Dendritic cell treated with granulocyte-macrophage colony-stimulating factor and Interleukin-4, amounts not matched to agents 40 ng/mL and 50 ng/mL, for 4 days (primary cell): ENCODE measurements at regions of chr4 and their contacts with region 1.

Region 1: DNA sequence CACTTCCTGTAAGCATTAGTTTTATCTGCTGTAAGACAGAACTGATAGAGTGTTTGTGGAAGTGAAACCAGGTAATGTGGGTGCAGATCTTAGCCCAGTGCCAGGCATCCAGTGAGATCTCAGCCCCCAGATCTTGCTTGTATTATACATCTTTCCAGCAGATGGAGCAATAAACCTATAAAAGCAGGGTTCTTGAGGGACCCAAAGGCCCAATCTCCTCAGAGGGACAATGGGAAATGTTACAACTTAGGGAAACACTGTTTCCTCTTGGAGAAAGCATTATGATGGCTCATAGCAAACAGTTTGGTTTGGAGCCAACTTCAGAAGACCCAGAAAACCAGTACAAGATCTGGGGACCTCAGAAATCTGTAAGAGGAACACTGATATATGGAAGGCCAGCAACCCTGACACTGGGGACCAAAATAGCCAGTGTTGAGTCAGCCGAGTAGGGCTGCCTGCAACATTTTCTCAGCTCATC is 206.3 kb downstream of the SLC7A11 start:
- H3K4me3 Mint-ChIP-seq: no peak overlapping the region
- H3K27ac Mint-ChIP-seq: no peak overlapping the region
- H3K4me1 Mint-ChIP-seq: peaks cover 5% of the 10 kb centered on the region
- H3K27me3 Mint-ChIP-seq: no peaks in the 10 kb centered on the region

Region 2: DNA sequence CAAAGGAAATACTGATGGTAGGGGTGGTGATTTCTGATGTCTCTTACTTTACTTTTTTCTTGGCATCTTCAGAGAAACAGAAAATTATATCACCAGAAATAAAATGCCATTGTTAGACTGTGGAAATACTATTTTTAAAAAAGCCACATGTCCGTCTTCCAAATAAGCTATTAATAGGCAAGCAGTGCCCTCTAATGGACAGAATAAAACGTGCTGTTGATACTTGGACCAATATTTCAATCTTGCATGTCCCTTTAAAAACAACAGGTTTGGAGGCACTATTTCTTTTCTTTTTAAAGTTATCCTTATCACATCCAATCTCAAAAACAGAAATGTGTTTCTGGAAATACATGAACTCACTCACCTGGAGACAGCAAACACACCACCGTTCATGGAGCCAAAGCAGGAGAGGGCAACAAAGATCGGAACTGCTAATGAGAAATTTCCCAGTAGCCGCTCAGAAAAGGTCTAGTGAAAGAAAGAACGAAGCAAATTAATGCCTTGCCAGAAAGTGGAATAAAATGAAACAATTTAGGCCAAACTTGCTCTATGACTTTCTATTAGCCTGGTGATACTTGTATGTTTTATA is 147.1 kb after region 1 on chr4:
- intact Hi-C with region 1: loop called (anchors 5 kb)
- H3K4me3 Mint-ChIP-seq: no peak overlapping the region
- H3K27ac Mint-ChIP-seq: peak overlapping the region; percentile 33
- H3K4me1 Mint-ChIP-seq: peaks cover 26% of the 10 kb centered on the region
- H3K27me3 Mint-ChIP-seq: no peaks in the 10 kb centered on the region

Region 3: GRCh38 chr4:138522366-138522765 is 486.5 kb after region 1 on chr4:
- intact Hi-C with region 1: loop called (anchors 2 kb)
- H3K4me3 Mint-ChIP-seq: no peak overlapping the region
- H3K27ac Mint-ChIP-seq: peak overlapping the region; percentile 15
- H3K4me1 Mint-ChIP-seq: peaks cover 13% of the 10 kb centered on the region
- H3K27me3 Mint-ChIP-seq: peaks cover 15% of the 10 kb centered on the region

Region 4: GRCh38 chr4:138870737-138871554 is 835.1 kb after region 1 on chr4:
- intact Hi-C with region 1: loop called (anchors 10 kb)
- H3K4me3 Mint-ChIP-seq: no peak overlapping the region
- H3K27ac Mint-ChIP-seq: no peak overlapping the region
- H3K4me1 Mint-ChIP-seq: no peaks in the 10 kb centered on the region
- H3K27me3 Mint-ChIP-seq: peaks cover 16% of the 10 kb centered on the region